GM12878 (cell line): ENCODE measurements at regions of chr12 and their contacts with region 1.

Region 1: DNA sequence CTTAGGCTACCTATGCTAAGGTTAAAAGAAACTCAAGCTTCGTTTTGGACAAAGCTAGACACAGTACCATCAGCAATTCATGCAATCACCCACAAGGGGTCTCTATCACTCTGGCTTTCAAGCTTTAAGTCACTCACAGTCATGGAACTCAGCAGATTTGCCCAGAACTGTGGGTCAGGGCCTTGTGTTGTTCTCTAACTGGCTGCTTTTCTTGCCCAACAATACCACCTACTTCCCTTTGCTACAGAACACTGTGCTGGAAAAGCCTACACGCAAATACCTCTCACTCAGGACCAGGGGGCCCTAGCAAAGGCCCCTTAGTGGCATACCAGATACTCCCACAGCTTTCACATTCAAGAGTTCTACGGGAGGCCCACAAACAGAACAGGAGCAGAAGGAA is 9.1 kb downstream of the NEMP1 start:
- DNase-seq: no peak
- ATAC-seq: peak; percentile 99
- H3K4me3 ChIP-seq: no peak overlapping the region; the same call in 1 of the 2 replicates
- H3K27ac ChIP-seq: peak overlapping the region; percentile 22; the same call in 1 of the 2 replicates
- H3K4me1 ChIP-seq: peaks cover 7% of the 10 kb centered on the region; the same call in 1 of the 2 replicates
- H3K27me3 ChIP-seq: no peaks in the 10 kb centered on the region
- CTCF ChIP-seq: peak; percentile 81 to 92 (median 89)
- EP300 ChIP-seq: no peak
- POLR2A ChIP-seq: no peak
- RAD21 ChIP-seq: peak; percentile 96

Region 2: GRCh38 chr12:57088459-57089248 is 19.1 kb after region 1 on chr12 and contains the start of gene NAB2:
- CTCF ChIA-PET with region 1: interaction called, 205 read pairs
- POLR2A ChIA-PET with region 1: interaction called, 74 read pairs
- RAD21 ChIA-PET with region 1: interaction called, 199 read pairs
- SMC1A ChIA-PET with region 1: interaction called, 169 read pairs
- in situ Hi-C with region 1: no loop called
- intact Hi-C with region 1: loop called (anchors 1 kb)
- DNase-seq: peak; percentile 72
- ATAC-seq: peak; percentile 69
- H3K4me3 ChIP-seq: peak within 1 kb of the TSS; percentile 95
- H3K27ac ChIP-seq: peak within 1 kb of the TSS; percentile 98
- H3K4me1 ChIP-seq: peaks cover 31% of the 10 kb centered on the region
- H3K27me3 ChIP-seq: no peaks in the 10 kb centered on the region
- CTCF ChIP-seq: no peak
- EP300 ChIP-seq: 0 out of 4 replicates have a peak, but pooled peaks of 1 of the 2 experiments have one; percentile 48
- POLR2A ChIP-seq: peak; percentile 82
- RAD21 ChIP-seq: no peak
- polyA plus RNA-seq, gene NAB2: 0.35 to 1.0 TPM

Region 3: DNA sequence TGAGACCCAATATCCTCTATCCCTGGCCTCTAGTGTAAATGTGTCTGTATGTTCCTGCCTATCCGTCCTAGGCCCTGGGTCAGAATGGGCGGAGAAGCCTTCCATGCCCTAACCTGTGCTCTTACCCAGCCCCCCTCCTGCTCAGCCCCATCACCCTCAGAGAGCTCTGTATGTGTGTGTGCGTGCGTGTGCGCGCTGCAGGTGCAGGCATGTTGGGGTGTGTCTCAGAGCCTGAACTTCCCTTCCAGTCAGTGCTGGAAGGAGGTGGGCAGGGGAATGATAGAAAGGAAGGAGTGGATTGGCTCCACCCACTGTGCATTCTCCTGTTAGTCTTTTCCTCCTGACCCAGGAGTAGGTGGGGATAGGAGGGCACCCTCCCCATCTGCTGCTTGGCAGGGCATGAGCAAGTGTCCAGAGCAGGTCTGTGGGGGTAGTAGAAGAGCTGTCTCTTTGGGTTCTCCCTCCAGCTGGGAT is 26.6 kb after region 1 on chr12:
- CTCF ChIA-PET with region 1: interaction called, 205 read pairs
- POLR2A ChIA-PET with region 1: interaction called, 74 read pairs
- RAD21 ChIA-PET with region 1: interaction called, 199 read pairs
- SMC1A ChIA-PET with region 1: interaction called, 169 read pairs
- in situ Hi-C with region 1: no loop called
- intact Hi-C with region 1: loop called (anchors 1 kb)
- DNase-seq: no peak
- ATAC-seq: no peak
- H3K4me3 ChIP-seq: no peak overlapping the region
- H3K27ac ChIP-seq: peak overlapping the region; percentile 38; the same call in 1 of the 2 replicates
- H3K4me1 ChIP-seq: peaks cover 28% of the 10 kb centered on the region
- H3K27me3 ChIP-seq: no peaks in the 10 kb centered on the region
- CTCF ChIP-seq: no peak
- EP300 ChIP-seq: no peak
- POLR2A ChIP-seq: peak; percentile 56
- RAD21 ChIP-seq: no peak

Region 4: GRCh38 chr12:57116580-57117281 is 47.2 kb after region 1 on chr12:
- CTCF ChIA-PET with region 1: interaction called, 458 read pairs
- POLR2A ChIA-PET with region 1: interaction called, 94 read pairs
- RAD21 ChIA-PET with region 1: interaction called, 285 read pairs
- SMC1A ChIA-PET with region 1: interaction called, 246 read pairs
- in situ Hi-C with region 1: loop called (anchors 5 kb)
- intact Hi-C with region 1: loop called (anchors 1 kb)
- DNase-seq: no peak
- ATAC-seq: no peak
- H3K4me3 ChIP-seq: no peak overlapping the region
- H3K27ac ChIP-seq: no peak overlapping the region
- H3K4me1 ChIP-seq: peaks cover 21% of the 10 kb centered on the region
- H3K27me3 ChIP-seq: no peaks in the 10 kb centered on the region
- CTCF ChIP-seq: no peak
- EP300 ChIP-seq: no peak
- POLR2A ChIP-seq: no peak
- RAD21 ChIP-seq: no peak

Region 5: DNA sequence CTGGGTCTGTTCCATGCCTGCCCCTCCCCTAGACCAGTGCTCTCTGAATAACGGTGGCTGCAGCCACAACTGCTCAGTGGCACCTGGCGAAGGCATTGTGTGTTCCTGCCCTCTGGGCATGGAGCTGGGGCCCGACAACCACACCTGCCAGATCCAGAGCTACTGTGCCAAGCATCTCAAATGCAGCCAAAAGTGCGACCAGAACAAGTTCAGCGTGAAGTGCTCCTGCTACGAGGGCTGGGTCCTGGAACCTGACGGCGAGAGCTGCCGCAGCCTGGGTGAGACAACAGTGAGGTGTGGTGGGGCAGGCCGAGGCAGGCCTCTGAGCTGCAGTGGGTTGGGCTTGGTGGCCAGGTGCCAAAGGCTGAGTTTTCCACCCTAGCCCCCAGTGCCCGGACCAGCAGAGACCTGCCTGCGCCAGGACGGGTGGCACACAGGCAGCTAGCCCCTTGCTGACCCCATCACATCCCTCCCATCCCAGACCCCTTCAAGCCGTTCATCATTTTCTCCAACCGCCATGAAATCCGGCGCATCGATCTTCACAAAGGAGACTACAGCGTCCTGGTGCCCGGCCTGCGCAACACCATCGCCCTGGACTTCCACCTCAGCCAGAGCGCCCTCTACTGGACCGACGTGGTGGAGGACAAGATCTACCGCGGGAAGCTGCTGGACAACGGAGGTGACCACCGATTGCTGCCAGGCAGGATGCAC is 106.1 kb after region 1 on chr12:
- CTCF ChIA-PET with region 1: interaction called, 11 read pairs
- POLR2A ChIA-PET with region 1: no interaction called
- RAD21 ChIA-PET with region 1: interaction called, 6 read pairs
- SMC1A ChIA-PET with region 1: interaction called, 3 read pairs
- in situ Hi-C with region 1: no loop called
- intact Hi-C with region 1: no loop called
- DNase-seq: no peak
- ATAC-seq: peak; percentile 60
- H3K4me3 ChIP-seq: no peak overlapping the region
- H3K27ac ChIP-seq: no peak overlapping the region
- H3K4me1 ChIP-seq: no peaks in the 10 kb centered on the region
- H3K27me3 ChIP-seq: no peaks in the 10 kb centered on the region; a peak in 1 of 4 replicates
- CTCF ChIP-seq: peak; percentile 53 to 78 (median 54)
- EP300 ChIP-seq: no peak
- POLR2A ChIP-seq: no peak
- RAD21 ChIP-seq: peak; percentile 27; the same call in 1 of the 2 replicates

Region 6: DNA sequence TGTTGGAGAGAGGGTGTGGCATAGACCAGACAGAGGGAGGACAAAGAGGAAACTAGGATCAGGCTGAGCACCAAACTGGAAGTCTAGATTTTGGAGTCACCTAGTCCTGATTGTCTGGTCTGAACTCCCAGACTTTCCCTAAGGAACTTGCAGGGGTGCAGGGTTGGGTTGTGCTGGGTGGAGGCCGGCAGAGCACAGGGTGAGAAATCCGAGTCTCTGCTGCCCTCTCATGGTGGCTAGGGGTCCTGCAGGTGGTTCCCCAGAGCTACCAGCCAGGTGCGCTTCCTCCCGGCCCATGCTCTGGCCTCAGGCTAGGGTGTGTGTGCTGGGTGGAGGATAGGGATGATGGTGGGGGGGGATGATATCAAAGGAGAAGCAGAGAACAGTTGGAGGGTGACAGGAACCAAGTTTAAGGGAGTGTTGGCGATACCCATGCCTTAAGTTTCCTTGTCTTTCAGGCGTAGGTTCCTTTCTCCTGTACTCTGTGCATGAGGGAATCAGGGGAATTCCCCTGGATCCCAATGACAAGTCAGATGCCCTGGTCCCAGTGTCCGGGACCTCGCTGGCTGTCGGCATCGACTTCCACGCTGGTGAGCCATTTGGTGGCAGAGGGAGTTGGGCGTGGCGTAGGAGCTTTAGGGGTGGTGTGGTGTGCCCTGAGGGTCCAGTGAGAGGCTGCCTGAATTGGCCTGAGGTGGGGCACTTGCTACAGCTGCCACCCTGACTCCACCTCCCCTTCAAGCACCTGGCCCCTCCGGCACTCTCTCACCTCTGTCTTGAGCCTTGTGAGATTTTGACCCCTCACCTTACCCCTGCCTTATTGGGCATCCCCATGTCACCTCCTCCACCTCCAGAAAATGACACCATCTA is 113.6 kb after region 1 on chr12:
- CTCF ChIA-PET with region 1: interaction called, 14 read pairs
- POLR2A ChIA-PET with region 1: interaction called, 4 read pairs
- RAD21 ChIA-PET with region 1: interaction called, 13 read pairs
- SMC1A ChIA-PET with region 1: interaction called, 10 read pairs
- in situ Hi-C with region 1: no loop called
- intact Hi-C with region 1: loop called (anchors 2 kb)
- DNase-seq: peak; percentile 15
- ATAC-seq: peak; percentile 98
- H3K4me3 ChIP-seq: no peak overlapping the region
- H3K27ac ChIP-seq: no peak overlapping the region
- H3K4me1 ChIP-seq: no peaks in the 10 kb centered on the region
- H3K27me3 ChIP-seq: no peaks in the 10 kb centered on the region; a peak in 2 of 4 replicates
- CTCF ChIP-seq: peak; percentile 96 to 98 (median 97)
- EP300 ChIP-seq: no peak
- POLR2A ChIP-seq: no peak
- RAD21 ChIP-seq: peak; percentile 89